ENCODE measurements at regions of chr3 and their contacts with region 1.

Region 1: GRCh38 chr3:149512209-149512782 is 37.8 kb downstream of the TM4SF4 start:
- DNase-seq: peak; percentile 36
- H3K4me3 ChIP-seq: no peak overlapping the region
- H3K27ac ChIP-seq: no peak overlapping the region
- H3K4me1 ChIP-seq: peaks cover 11% of the 10 kb centered on the region
- H3K27me3 ChIP-seq: no peaks in the 10 kb centered on the region
- CTCF ChIP-seq: peak; percentile 81 to 83

Region 2: GRCh38 chr3:149527531-149528339 is 15.4 kb after region 1 on chr3:
- CTCF ChIA-PET with region 1: no interaction called
- dilution Hi-C with region 1: no loop called
- in situ Hi-C with region 1: no loop called
- intact Hi-C with region 1: no loop called
- DNase-seq: no peak
- H3K4me3 ChIP-seq: no peak overlapping the region
- H3K27ac ChIP-seq: no peak overlapping the region
- H3K4me1 ChIP-seq: peaks cover 14% of the 10 kb centered on the region
- H3K27me3 ChIP-seq: no peaks in the 10 kb centered on the region
- CTCF ChIP-seq: no peak

Region 3: GRCh38 chr3:149566292-149566975 is 54.1 kb after region 1 on chr3:
- CTCF ChIA-PET with region 1: no interaction called
- dilution Hi-C with region 1: no loop called
- in situ Hi-C with region 1: no loop called
- intact Hi-C with region 1: loop called (anchors 5 kb)
- DNase-seq: no peak
- H3K4me3 ChIP-seq: no peak overlapping the region
- H3K27ac ChIP-seq: no peak overlapping the region
- H3K4me1 ChIP-seq: peaks cover 4% of the 10 kb centered on the region
- H3K27me3 ChIP-seq: no peaks in the 10 kb centered on the region
- CTCF ChIP-seq: no peak

Region 4: DNA sequence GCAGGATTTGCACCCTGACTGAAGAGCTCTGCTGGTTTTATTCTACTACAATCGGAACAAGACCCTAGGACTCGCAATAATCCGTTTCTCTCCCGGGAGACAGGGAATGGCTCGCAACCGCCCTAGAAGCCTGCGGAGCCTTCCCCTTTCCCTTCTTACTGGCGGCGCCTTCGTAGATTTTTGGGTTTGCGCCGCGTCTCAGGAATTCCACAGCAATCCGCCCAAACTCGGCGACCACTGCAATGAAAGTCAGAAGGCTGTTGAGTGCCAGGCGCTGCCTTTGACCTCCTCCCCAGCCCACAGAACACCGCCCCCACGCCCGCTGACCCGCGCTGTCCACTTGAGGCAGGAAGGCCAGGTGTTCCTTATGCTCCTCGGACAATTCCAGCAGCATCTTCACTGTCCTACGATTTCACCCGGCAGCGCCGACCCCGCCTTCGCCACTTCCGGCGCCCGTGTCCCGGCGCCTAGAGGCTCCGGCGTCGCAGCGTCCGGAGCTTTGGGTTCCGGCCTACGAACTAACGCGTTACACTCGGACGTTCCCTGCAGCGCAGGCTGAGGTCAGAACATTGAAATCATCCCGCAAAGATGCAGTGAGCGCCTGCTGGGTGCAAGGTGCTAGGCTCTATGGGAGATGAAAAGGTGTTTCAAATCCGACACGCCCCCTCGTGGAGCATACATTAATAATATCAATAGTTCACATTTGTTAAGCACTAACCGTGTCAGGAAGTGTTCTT is 239.9 kb after region 1 on chr3 and contains the start of gene COMMD2:
- CTCF ChIA-PET with region 1: no interaction called
- dilution Hi-C with region 1: loop called (anchors 25 kb)
- in situ Hi-C with region 1: no loop called
- intact Hi-C with region 1: loop called (anchors 1 kb)
- DNase-seq: peak; percentile 92
- H3K4me3 ChIP-seq: peak within 1 kb of the TSS; percentile 85 to 100 (median 98)
- H3K27ac ChIP-seq: peak within 1 kb of the TSS; percentile 75
- H3K4me1 ChIP-seq: peaks cover 17% of the 10 kb centered on the region
- H3K27me3 ChIP-seq: no peaks in the 10 kb centered on the region
- CTCF ChIP-seq: peak; percentile 27 to 37
- total RNA-seq, gene COMMD2: 29.3 to 38.8 TPM

Region 5: DNA sequence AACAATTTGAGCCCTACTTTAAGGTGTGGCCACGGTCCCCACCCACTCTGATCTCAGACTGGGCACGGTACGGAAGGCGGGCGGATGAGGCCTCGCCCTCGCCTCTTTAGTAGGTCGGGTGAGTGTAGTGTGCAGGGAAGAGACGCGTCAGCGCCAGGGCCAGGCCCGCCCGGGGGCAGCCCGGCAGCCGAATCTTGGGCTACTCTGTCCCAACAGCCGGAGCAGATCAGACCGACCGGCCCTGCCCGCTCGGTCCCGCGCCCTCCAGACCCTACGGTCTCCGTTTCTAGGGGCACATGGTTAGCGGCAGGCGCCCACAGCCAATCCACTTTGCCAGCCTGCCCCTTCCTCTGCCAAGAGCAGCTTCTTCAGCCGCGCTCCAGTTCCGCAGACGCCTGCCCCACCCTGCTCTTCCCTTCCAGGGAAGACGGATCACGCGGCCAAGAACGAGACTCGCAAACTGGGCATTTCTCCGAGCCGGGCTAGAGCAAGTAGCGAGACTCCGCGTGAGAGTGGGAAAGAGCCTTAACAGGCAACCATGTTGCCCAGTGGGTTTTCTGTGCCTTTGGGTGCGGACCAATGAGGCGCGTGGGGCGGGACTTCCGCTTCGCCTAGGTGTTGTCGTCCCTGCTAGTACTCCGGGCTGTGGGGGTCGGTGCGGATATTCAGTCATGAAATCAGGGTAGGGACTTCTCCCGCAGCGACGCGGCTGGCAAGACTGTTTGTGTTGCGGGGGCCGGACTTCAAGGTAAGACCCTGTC is 300.5 kb after region 1 on chr3 and contains the start of gene RNF13:
- CTCF ChIA-PET with region 1: interaction called, 3 read pairs
- dilution Hi-C with region 1: no loop called
- in situ Hi-C with region 1: no loop called
- intact Hi-C with region 1: loop called (anchors 1 kb)
- DNase-seq: peak; percentile 88
- H3K4me3 ChIP-seq: peak within 1 kb of the TSS; percentile 43 to 64 (median 62)
- H3K27ac ChIP-seq: peak within 1 kb of the TSS; percentile 95
- H3K4me1 ChIP-seq: peaks cover 41% of the 10 kb centered on the region
- H3K27me3 ChIP-seq: no peaks in the 10 kb centered on the region
- CTCF ChIP-seq: no peak
- total RNA-seq, gene RNF13: 39.7 to 105 TPM

Region 6: DNA sequence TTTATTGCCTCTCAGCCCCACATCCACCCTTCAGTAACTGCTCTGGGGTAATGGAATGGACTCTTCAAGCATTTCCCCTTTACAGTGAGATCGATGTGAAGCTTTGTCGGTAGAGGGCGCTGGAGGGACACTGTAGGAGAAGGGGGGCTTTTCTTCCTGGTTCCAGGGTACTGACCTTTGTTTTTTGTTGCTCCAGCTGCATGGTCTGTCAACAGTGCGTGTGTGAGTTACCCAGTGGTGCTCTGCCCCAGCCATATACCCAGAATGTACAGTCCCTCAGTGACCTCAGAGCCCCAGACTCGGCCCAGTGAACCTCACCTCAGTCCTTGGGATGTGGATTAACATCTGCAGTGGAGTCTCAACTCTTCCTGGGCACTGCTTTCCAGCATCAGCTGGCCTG is 715.5 kb after region 1 on chr3:
- CTCF ChIA-PET with region 1: no interaction called
- dilution Hi-C with region 1: no loop called
- in situ Hi-C with region 1: loop called in 1 of 2 experiments (anchors 25 kb)
- intact Hi-C with region 1: loop called (anchors 10 kb)
- DNase-seq: no peak
- H3K4me3 ChIP-seq: no peak overlapping the region
- H3K27ac ChIP-seq: no peak overlapping the region
- H3K4me1 ChIP-seq: peaks cover 5% of the 10 kb centered on the region
- H3K27me3 ChIP-seq: no peaks in the 10 kb centered on the region
- CTCF ChIP-seq: peak; percentile 82 to 83